Activated CD4-positive, alpha-beta T cell treated with anti-CD3 and anti-CD28 coated beads for 36 hours (primary cell): ENCODE measurements at regions of chr10 and their contacts with region 1.

Region 1: DNA sequence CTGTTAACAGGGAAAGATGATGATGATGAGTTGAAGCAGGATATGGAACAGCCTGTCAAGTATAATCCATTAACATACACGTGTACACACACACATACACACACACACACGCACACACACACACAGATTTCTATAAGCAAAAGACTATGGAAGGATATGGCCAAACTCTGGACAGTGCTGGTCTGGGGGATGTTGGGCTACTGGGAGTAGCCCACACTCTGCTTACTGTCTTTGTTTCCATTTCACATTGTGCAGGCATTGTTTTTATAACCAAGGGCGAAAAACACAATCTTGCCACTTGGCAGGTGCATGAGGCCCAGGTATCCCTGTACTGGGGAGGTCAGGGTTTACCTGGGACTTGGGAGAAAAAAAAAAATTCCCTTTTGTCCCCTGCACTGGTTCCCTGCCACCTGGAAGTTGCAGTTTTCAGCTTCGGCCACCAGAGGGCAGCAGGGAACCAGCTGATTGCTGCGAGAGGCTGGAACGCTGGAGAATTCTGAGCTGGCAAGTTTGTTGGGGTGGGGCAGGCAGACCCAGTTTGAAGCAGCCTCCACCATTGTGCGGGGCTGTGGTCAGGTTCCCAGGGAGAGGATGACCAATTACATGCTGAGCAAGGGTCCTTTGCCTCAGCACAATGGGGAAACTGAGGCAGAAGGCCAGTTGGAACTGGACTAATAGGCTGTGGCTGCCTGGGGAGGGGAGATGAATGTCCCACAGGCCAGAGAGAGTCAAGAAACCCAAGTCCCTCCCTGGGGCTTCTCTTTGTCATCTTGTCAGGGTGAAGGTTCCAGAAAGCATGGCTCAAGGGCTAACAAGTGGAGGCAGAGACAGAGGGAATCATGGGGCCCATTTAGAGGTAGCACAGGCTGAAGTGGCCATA is 27.3 kb downstream of the PPIF start:
- DNase-seq: peak; percentile 88
- ATAC-seq: peak; percentile 78
- H3K4me3 Mint-ChIP-seq: no peak overlapping the region
- H3K27ac Mint-ChIP-seq: peak overlapping the region; percentile 11
- H3K4me1 Mint-ChIP-seq: peaks cover 3% of the 10 kb centered on the region
- H3K27me3 Mint-ChIP-seq: no peaks in the 10 kb centered on the region

Region 2: GRCh38 chr10:79358783-79359182 is 15.8 kb before region 1 on chr10:
- CTCF ChIA-PET with region 1: interaction called, 35 read pairs
- POLR2A ChIA-PET with region 1: no interaction called
- intact Hi-C with region 1: no loop called
- DNase-seq: no peak
- ATAC-seq: no peak
- H3K4me3 Mint-ChIP-seq: no peak overlapping the region
- H3K27ac Mint-ChIP-seq: no peak overlapping the region
- H3K4me1 Mint-ChIP-seq: peaks cover 22% of the 10 kb centered on the region
- H3K27me3 Mint-ChIP-seq: no peaks in the 10 kb centered on the region

Region 3: DNA sequence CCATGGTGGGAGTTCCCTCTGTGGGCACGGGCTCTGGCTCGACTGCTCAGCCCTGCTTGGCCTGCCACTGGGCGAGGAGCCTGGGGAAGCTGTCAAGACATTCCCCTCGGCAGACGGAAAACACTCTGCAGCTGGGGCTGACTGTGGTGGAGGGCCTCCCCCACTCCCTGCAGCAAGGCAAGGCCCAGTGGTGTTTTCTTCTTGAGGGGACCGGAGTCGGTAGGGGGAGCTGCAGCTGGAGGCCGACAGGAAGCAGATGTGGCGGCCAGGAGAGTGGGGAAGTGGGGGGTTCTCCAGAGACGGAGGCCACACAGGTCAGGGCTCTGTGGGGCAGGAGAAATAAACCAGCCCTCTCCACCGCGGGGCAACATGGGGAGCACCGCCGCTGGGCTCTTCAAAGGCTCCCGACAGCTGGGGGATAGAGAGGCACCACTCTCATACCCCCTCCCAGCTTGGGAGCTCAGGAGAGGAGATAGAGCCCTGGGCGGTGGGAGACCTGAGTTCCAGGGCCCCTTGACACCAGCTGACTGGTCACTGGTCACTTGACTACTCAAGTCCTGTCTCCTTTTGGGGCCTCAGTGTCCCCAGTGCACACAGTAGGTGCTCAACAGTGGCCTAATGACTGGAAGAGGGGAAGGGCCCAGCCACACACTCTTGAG is 16.1 kb after region 1 on chr10:
- CTCF ChIA-PET with region 1: interaction called, 23 read pairs
- POLR2A ChIA-PET with region 1: no interaction called
- intact Hi-C with region 1: no loop called
- DNase-seq: peak; percentile 33
- ATAC-seq: peak; percentile 25
- H3K4me3 Mint-ChIP-seq: no peak overlapping the region
- H3K27ac Mint-ChIP-seq: no peak overlapping the region
- H3K4me1 Mint-ChIP-seq: no peaks in the 10 kb centered on the region
- H3K27me3 Mint-ChIP-seq: no peaks in the 10 kb centered on the region

Region 4: GRCh38 chr10:79407811-79408795 is 33.6 kb after region 1 on chr10:
- CTCF ChIA-PET with region 1: interaction called, 18 read pairs
- POLR2A ChIA-PET with region 1: no interaction called
- intact Hi-C with region 1: no loop called
- DNase-seq: no peak
- ATAC-seq: no peak
- H3K4me3 Mint-ChIP-seq: no peak overlapping the region
- H3K27ac Mint-ChIP-seq: no peak overlapping the region
- H3K4me1 Mint-ChIP-seq: peaks cover 2% of the 10 kb centered on the region
- H3K27me3 Mint-ChIP-seq: peaks cover 2% of the 10 kb centered on the region

Region 5: DNA sequence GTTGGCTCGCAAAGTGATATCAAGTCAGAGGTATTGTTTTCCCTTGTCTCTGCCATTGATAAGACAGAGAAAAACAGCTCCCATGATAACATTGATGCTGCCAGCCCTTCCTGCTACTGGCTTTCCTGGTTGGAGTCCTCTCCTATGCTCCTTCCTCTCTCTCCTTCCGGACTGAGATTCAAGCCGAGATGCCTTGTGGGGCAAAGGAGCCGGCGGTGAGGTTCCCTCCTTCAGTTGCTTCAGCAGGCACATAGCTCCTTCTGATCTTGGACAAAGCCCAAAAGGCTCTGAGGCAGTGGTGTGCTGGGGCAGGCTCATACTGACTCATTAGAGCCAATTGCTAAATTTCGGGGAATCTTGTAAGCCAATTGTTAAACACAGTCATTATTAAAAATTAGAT is 79.7 kb after region 1 on chr10:
- CTCF ChIA-PET with region 1: interaction called, 11 read pairs
- POLR2A ChIA-PET with region 1: no interaction called
- intact Hi-C with region 1: no loop called
- DNase-seq: no peak
- ATAC-seq: no peak
- H3K4me3 Mint-ChIP-seq: no peak overlapping the region
- H3K27ac Mint-ChIP-seq: no peak overlapping the region
- H3K4me1 Mint-ChIP-seq: no peaks in the 10 kb centered on the region
- H3K27me3 Mint-ChIP-seq: peaks cover 1% of the 10 kb centered on the region

Region 6: DNA sequence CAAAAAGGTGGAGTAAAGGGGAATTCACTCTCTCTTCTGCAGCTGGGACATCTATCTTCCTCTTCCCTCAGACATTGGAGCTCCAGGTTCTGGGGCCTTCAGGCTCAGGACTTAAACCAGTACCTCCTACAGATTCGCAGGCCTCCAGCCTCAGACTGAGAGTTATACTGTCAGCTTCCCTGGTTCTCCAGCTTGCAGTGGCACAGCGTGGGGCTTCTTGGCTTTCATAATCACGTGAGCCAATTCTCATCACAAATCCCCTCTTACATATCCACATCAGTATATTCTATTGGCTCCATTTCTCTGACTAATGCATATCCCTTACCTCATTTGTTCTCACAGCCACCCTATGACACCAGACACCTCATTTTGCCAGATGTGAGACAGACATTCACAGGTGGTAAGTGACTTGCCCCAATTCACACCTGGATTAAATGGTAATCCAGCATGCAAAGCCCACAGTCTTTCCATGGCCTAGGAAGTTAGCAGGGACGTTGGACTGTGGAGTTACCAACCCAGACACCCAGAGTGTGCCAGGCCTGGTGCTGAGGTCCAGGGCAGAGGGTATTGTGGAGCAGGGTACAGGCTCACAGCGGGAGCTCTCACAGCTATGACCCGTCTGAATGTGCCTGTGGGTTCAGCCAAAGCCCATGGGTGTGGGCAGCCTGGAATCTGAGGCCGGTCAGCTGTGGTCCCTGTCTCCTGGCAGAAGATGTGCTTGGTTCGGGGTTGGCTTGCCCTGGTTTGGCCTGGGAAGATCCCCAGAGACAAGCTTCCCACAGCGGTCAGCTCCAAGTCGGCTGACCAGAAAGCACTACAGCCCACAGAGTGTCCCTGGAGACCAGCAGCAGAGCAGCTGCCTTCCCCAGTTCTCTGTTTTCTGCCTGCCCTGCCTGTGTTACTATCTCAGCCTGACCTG is 89.3 kb after region 1 on chr10:
- CTCF ChIA-PET with region 1: interaction called, 56 read pairs
- POLR2A ChIA-PET with region 1: no interaction called
- intact Hi-C with region 1: loop called (anchors 1 kb)
- DNase-seq: no peak
- ATAC-seq: no peak
- H3K4me3 Mint-ChIP-seq: no peak overlapping the region
- H3K27ac Mint-ChIP-seq: no peak overlapping the region
- H3K4me1 Mint-ChIP-seq: no peaks in the 10 kb centered on the region
- H3K27me3 Mint-ChIP-seq: no peaks in the 10 kb centered on the region

Region 7: GRCh38 chr10:79487296-79488194 is 113.0 kb after region 1 on chr10:
- CTCF ChIA-PET with region 1: interaction called, 28 read pairs
- POLR2A ChIA-PET with region 1: no interaction called
- intact Hi-C with region 1: loop called (anchors 1 kb)
- DNase-seq: peak; percentile 59
- ATAC-seq: peak; percentile 69
- H3K4me3 Mint-ChIP-seq: no peak overlapping the region
- H3K27ac Mint-ChIP-seq: no peak overlapping the region
- H3K4me1 Mint-ChIP-seq: no peaks in the 10 kb centered on the region
- H3K27me3 Mint-ChIP-seq: peaks cover 2% of the 10 kb centered on the region